ENCODE measurements at regions of chr16 and their contacts with region 1.

Region 1: DNA sequence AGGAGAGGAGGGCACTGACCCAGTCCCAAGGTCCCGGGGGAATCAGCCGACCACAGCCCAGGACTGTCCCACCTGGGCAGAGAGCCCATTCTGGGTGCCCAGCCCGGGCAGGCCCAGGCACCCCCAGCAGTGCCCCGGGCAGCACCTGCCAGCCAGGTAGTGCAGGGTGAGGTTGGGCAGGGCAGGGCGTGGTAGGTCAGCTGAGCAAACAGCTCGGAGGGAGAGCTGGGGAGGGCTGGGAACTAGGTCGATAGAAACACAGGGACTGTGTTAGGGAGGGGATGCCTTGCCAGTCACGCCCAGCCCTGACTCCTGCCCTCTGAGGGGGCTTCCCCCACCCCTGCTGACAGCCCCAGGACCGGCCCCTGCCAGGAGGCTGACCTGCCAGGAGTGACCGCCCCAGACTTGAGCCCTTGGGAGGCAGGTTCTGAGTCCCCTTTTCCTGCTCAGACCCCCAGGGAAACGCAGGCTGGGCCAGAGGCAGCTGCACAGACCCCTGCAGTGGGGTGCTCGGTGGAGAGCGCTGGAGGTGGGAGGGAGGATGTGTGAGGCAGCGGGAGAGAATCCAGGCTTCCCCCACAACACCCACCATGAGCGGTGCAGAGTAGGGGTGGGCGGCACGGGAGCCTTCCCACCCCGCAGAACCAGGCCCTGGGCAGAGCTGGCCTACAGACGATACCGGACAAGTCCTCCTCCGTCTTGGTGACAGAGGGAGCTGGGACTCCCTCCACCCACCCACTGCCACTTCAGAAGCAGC is 4.7 kb downstream of the HS3ST6 start:
- DNase-seq: no peak
- ATAC-seq: no peak
- H3K4me3 Mint-ChIP-seq: no peak overlapping the region
- H3K27ac Mint-ChIP-seq: no peak overlapping the region
- H3K4me1 Mint-ChIP-seq: no peaks in the 10 kb centered on the region
- H3K27me3 Mint-ChIP-seq: peaks cover 20% of the 10 kb centered on the region
- CTCF ChIP-seq: no peak

Region 2: DNA sequence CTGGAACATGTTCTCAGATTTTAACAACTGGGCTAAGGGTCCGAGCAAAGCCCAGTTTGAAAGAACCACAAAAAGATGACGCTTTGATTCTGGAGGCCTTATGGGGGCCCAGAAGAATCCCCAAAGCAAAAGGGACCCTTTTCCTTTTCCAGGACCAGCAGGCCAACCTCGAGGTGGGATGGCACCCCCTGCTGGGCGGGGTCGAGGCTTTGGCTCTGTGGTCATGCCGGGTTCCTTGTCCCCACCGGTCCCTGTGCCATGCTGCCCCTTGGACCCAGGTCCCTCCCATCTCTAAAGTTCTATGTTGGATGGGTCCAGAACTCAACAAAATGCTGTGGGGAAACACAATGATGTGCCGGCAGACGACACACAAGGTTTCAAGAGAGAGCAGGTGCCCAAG is 349.2 kb before region 1 on chr16:
- CTCF ChIA-PET with region 1: no interaction called
- POLR2A ChIA-PET with region 1: no interaction called
- intact Hi-C with region 1: no loop called
- DNase-seq: no peak
- ATAC-seq: no peak
- H3K4me3 Mint-ChIP-seq: no peak overlapping the region
- H3K27ac Mint-ChIP-seq: no peak overlapping the region
- H3K4me1 Mint-ChIP-seq: no peaks in the 10 kb centered on the region
- H3K27me3 Mint-ChIP-seq: no peaks in the 10 kb centered on the region
- CTCF ChIP-seq: no peak

Region 3: GRCh38 chr16:1820946-1821290 is 92.6 kb before region 1 on chr16:
- CTCF ChIA-PET with region 1: no interaction called
- POLR2A ChIA-PET with region 1: interaction called, 12 read pairs
- intact Hi-C with region 1: no loop called
- DNase-seq: no peak
- ATAC-seq: no peak
- H3K4me3 Mint-ChIP-seq: no peak overlapping the region
- H3K27ac Mint-ChIP-seq: no peak overlapping the region
- H3K4me1 Mint-ChIP-seq: peaks cover 15% of the 10 kb centered on the region
- H3K27me3 Mint-ChIP-seq: no peaks in the 10 kb centered on the region
- CTCF ChIP-seq: no peak

Region 4: DNA sequence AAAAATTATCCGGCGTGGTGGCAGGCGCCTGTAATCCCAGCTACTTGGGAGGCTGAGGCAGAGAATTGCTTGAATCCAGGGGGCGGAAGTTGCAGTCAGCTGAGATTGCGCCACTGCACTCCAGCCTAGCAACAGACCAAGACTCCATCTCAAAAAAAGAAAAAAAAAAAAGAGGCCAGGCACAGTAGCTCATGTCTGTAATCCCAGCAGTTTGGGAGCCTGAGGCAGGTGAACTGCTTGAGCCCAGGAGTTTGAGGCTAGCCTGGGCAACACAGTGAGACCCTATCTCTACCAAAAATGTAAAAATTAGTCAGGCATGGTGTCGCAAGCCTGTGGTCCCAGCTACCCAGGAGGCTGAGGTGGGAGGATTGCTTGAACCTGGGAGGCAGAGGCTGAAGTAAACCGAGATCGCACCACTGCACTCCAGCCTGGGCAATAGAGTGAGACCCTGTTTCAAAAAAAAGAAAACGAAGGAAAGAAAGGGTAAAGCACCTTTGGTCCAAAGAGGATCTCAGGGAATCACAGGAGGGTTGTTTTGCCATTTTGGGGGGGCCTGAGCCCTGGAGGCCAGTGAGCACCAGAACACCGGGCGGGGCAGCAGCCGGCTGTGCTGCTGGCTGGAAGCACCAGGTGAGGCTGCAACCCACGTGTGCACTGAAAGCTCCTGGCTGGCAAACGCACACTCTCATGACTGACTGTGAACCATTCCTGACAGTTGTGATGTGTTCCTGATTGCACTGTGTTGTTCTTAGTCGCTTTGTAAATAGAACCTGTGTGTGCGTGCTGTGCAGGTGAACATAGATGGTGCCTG is 13.7 kb before region 1 on chr16:
- CTCF ChIA-PET with region 1: no interaction called
- POLR2A ChIA-PET with region 1: no interaction called
- intact Hi-C with region 1: no loop called
- DNase-seq: no peak
- ATAC-seq: no peak
- H3K4me3 Mint-ChIP-seq: no peak overlapping the region
- H3K27ac Mint-ChIP-seq: no peak overlapping the region
- H3K4me1 Mint-ChIP-seq: no peaks in the 10 kb centered on the region
- H3K27me3 Mint-ChIP-seq: peaks cover 9% of the 10 kb centered on the region
- CTCF ChIP-seq: no peak

Measured in activated B cell treated with CpG ODN at 0.5 μM for 24 hours (primary cell).